Activated T-helper 1 cell treated with anti-CD3 and anti-CD28 coated beads, Interleukin-12 subunit alpha, Interleukin-12 subunit beta, Interleukin-2, Interleukin-4 antibody, amounts not matched to agents 30 ng/mL and 10 ng/mL and 1 ng/mL, durations not matched to agents 14 hours and 24 hours and 36 hours (primary cell): ENCODE measurements at regions of chrX and their contacts with region 1.

Region 1: DNA sequence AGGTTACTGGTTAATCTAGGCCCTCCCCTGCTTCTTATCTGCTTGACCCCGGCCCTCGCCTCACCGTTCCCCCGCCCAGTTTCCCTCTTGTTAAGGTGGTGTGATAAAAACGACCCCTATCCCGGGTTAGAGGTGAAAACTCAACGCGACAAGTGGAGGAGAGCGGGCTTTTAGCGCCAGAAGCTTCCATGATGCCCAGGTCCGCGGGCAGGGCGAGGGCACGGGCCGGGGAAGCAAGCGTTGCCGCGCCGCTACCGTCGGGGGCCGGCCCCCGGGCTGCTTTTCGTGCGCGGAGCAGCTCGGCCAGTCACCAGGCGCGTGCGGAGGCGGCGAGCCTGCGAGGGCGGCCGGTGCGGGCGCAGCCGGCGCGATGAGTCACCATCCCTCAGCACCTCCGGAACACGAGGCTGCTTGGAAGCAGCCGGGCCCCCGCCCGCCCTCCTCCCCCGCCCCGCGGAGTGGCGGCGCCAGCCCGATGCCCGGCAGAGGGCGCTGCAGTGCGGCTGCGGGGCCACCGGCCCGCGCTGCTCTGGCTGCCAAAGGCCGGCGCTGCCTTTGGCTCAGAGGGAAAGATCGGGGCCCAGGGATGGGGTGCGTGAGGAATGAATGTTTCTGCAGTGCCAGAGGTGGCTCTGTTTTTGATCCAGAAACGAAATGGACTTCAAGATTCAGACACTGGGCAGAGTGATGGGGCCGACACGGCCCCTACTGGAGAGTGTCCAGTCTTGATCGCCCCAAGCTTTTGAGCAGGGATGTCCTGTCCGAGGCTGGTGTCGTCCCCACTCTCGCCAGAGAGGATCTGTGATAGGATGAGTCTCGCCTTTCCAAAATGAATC is 107.8 kb downstream of the NHSL2 start:
- DNase-seq: peak; percentile 70
- H3K4me3 Mint-ChIP-seq: no peak overlapping the region
- H3K27ac Mint-ChIP-seq: no peak overlapping the region
- H3K4me1 Mint-ChIP-seq: peaks cover 15% of the 10 kb centered on the region
- H3K27me3 Mint-ChIP-seq: peaks cover 44% of the 10 kb centered on the region

Region 2: GRCh38 chrX:72100824-72101351 is 82.4 kb after region 1 on chrX:
- intact Hi-C with region 1: loop called (anchors 1 kb)
- DNase-seq: peak; percentile 71
- H3K4me3 Mint-ChIP-seq: peak overlapping the region; percentile 52
- H3K27ac Mint-ChIP-seq: peak overlapping the region; percentile 85
- H3K4me1 Mint-ChIP-seq: peaks cover 50% of the 10 kb centered on the region
- H3K27me3 Mint-ChIP-seq: peaks cover 40% of the 10 kb centered on the region

Region 3: DNA sequence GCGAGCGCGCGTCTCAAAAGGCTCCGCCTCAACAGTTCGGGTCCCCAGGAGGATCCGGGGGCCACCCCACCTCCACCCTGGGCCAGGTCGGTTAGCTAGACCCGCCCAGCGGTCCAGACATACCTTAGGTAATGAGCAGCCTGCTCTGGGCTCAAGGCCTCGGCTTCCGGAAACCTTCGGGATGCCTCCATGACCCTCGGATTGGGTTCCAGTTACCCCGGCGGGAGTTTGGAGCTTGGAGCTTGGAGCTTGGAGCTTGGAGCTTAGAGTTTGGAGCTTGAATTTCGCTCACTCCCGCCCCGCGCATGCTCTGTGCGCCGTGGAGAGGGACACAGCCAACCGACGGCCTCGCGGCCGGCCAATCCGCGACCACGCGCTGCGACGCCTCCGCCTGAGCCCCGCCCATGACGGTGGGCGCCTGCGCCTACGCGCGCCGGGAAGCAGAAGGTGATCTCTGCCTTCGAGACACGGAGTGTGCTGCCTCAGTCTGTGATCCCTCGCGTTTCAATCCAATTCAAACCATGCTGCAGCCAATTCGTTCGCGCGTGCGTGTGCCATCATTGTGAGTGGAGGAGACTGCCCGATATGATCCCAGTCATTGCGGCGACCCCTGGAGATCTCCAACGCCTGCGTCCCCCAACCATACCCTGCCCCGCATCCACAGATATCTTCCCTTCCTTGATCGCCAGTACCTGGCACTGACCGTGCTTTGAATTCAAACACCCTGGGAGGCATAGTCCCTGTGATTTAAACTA is 220.4 kb after region 1 on chrX and contains the start of gene ERCC6L:
- intact Hi-C with region 1: loop called (anchors 10 kb)
- DNase-seq: peak; percentile 84
- H3K4me3 Mint-ChIP-seq: peak within 1 kb of the TSS; percentile 84
- H3K27ac Mint-ChIP-seq: peak within 1 kb of the TSS; percentile 67
- H3K4me1 Mint-ChIP-seq: peaks cover 9% of the 10 kb centered on the region
- H3K27me3 Mint-ChIP-seq: no peaks in the 10 kb centered on the region
- total RNA-seq, gene ERCC6L: 7.4 and 7.5 TPM in 2 replicates